PC-3 (cell line): ENCODE measurements at regions of chr5 and their contacts with region 1.

Region 1: GRCh38 chr5:77518304-77518703 is 26.2 kb upstream of the WDR41 start:
- DNase-seq: peak; percentile 37
- ATAC-seq: no peak
- H3K4me3 ChIP-seq: no peak overlapping the region
- H3K27ac ChIP-seq: no peak overlapping the region
- H3K4me1 ChIP-seq: no peaks in the 10 kb centered on the region
- H3K27me3 ChIP-seq: no peaks in the 10 kb centered on the region
- CTCF ChIP-seq: peak; percentile 46

Region 2: GRCh38 chr5:77499441-77499840 is 18.9 kb before region 1 on chr5:
- CTCF ChIA-PET with region 1: no interaction called
- POLR2A ChIA-PET with region 1: no interaction called
- intact Hi-C with region 1: no loop called
- DNase-seq: no peak
- ATAC-seq: no peak
- H3K4me3 ChIP-seq: no peak overlapping the region
- H3K27ac ChIP-seq: no peak overlapping the region
- H3K4me1 ChIP-seq: no peaks in the 10 kb centered on the region
- H3K27me3 ChIP-seq: no peaks in the 10 kb centered on the region
- CTCF ChIP-seq: no peak

Region 3: DNA sequence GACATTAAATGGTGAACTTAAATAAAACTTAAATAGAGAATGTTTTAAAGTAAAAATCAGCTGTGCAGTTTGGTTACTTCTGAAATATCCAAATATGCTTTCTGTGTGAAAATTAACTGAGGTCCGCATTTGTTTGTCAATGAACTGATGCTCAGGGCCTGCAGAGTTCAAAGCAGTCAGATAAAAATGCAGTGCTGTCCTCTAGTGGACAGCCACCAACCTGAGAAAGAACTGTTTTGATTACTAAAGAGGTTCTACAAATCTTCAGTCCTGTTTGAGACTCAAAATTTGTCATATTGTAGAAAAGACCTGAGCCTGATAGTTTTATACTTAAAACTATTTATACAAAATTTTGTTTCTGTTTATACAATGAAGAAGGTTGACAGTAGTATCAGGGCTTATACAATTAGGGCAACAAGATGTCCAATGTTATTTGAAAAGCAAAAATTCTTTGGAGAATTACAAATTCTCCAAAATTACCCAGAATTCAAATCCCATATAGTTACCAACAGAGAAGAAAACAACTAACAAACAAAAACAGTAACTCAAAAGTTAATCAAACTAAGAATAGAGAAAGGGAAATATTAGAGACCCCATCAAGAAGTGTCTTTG is 490.2 kb after region 1 on chr5:
- CTCF ChIA-PET with region 1: no interaction called
- POLR2A ChIA-PET with region 1: no interaction called
- intact Hi-C with region 1: loop called (anchors 1 kb)
- DNase-seq: peak; percentile 56
- ATAC-seq: peak; percentile 55
- H3K4me3 ChIP-seq: no peak overlapping the region
- H3K27ac ChIP-seq: no peak overlapping the region
- H3K4me1 ChIP-seq: no peaks in the 10 kb centered on the region
- H3K27me3 ChIP-seq: no peaks in the 10 kb centered on the region
- CTCF ChIP-seq: peak; percentile 78